Caco-2 (cell line): ENCODE measurements at regions of chr10 and their contacts with region 1.

Region 1: DNA sequence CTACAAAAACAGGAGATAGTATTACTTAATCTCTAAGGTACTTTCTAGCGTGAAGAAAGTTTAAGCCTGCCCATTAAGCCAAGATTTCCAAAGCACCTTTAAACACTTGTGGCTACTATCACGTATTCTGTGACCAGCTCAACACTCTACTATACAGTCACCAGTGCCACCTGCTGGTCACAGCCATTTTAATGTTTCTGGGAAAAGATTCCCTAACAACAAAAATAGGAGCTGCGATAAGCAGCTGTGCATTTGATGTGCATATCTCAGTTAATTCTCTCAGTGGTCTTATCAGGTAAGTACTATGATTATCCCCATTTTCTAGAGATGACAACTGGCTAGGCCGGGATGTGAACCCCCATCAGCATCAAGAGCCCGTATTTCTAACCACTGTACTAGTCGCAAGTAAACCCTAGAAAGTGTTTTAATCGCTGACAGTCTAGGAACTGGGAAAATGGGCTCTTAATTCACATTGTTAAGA is 860 bp downstream of the SEC31B start:
- DNase-seq: peak; percentile 52 to 66
- H3K4me3 ChIP-seq: no peak overlapping the region
- H3K4me3 Mint-ChIP-seq: no peak overlapping the region
- H3K27ac Mint-ChIP-seq: no peak overlapping the region
- H3K4me1 ChIP-seq: no peaks in the 10 kb centered on the region
- H3K4me1 Mint-ChIP-seq: no peaks in the 10 kb centered on the region
- H3K27me3 ChIP-seq: no peaks in the 10 kb centered on the region
- H3K27me3 Mint-ChIP-seq: no peaks in the 10 kb centered on the region
- CTCF ChIP-seq: peak; percentile 58 to 70

Region 2: DNA sequence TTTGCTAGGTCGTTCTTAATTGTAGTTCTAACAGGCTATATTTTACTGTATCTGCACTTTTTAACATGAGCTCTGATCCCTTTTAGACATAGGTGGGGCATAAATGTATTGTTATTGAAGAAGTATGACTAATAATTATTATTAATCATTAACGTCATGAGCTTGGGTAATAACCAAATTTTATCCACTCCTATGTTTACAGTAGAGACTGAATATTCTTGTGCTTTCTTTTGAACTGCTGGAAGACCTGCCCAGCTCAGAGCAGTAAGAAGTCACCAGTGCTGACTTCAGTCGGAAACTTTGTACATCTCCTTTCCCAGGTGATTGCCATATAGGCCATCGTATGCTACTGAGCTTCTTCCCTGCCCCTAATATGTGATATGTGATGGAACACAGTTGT is 207.5 kb before region 1 on chr10:
- CTCF ChIA-PET with region 1: no interaction called
- POLR2A ChIA-PET with region 1: no interaction called
- intact Hi-C with region 1: no loop called
- DNase-seq: no peak
- H3K4me3 ChIP-seq: no peak overlapping the region
- H3K4me3 Mint-ChIP-seq: no peak overlapping the region
- H3K27ac Mint-ChIP-seq: no peak overlapping the region
- H3K4me1 ChIP-seq: 0 out of 2 replicates have a peak, but pooled peaks cover 10% of the 10 kb centered on the region
- H3K4me1 Mint-ChIP-seq: peaks cover 13% of the 10 kb centered on the region
- H3K27me3 ChIP-seq: no peaks in the 10 kb centered on the region
- H3K27me3 Mint-ChIP-seq: peaks cover 4% of the 10 kb centered on the region
- CTCF ChIP-seq: no peak

Region 3: GRCh38 chr10:100433253-100434240 is 85.3 kb before region 1 on chr10:
- CTCF ChIA-PET with region 1: interaction called, 13 read pairs
- POLR2A ChIA-PET with region 1: no interaction called
- intact Hi-C with region 1: loop called (anchors 1 kb)
- DNase-seq: peak; percentile 95
- H3K4me3 ChIP-seq: no peak overlapping the region
- H3K4me3 Mint-ChIP-seq: no peak overlapping the region
- H3K27ac Mint-ChIP-seq: no peak overlapping the region
- H3K4me1 ChIP-seq: no peaks in the 10 kb centered on the region
- H3K4me1 Mint-ChIP-seq: no peaks in the 10 kb centered on the region
- H3K27me3 ChIP-seq: no peaks in the 10 kb centered on the region
- H3K27me3 Mint-ChIP-seq: no peaks in the 10 kb centered on the region
- CTCF ChIP-seq: peak; percentile 96 to 97

Region 4: DNA sequence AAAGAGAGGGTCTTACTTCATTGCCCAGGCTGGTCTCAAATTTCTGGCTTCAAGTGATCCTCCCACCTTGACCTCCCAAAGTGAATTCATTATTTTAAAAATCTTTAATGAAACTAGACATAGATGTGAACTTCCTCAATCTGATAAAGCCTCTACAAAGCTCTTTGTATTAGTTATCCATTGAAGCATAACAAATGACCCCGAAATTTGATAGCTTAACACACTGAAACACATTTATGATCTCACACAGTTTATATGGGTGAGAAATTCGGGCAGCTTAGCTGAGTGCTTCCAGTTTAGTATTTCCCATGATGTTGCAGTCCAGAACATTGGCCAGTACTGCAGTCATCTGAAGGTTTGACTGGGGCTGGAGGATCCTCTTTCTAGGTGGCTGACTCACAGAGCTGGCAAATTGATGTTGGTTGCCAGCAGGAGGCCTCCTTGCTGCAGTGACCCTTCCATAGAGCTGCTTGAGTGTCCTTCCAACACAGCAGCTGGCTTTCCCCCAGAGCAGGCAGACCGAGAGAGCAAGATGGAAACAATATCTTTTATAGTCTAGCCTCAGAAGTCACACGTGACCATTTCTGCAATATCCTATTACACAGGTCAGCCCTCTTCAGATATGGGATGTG is 72.6 kb before region 1 on chr10:
- CTCF ChIA-PET with region 1: interaction called, 23 read pairs
- POLR2A ChIA-PET with region 1: no interaction called
- intact Hi-C with region 1: no loop called
- DNase-seq: peak; percentile 37 to 46
- H3K4me3 ChIP-seq: no peak overlapping the region
- H3K4me3 Mint-ChIP-seq: no peak overlapping the region
- H3K27ac Mint-ChIP-seq: no peak overlapping the region
- H3K4me1 ChIP-seq: no peaks in the 10 kb centered on the region
- H3K4me1 Mint-ChIP-seq: peaks cover 13% of the 10 kb centered on the region
- H3K27me3 ChIP-seq: no peaks in the 10 kb centered on the region; the same call in 1 of the 2 replicates
- H3K27me3 Mint-ChIP-seq: no peaks in the 10 kb centered on the region
- CTCF ChIP-seq: peak in 1 of 2 experiments; percentile 51

Region 5: DNA sequence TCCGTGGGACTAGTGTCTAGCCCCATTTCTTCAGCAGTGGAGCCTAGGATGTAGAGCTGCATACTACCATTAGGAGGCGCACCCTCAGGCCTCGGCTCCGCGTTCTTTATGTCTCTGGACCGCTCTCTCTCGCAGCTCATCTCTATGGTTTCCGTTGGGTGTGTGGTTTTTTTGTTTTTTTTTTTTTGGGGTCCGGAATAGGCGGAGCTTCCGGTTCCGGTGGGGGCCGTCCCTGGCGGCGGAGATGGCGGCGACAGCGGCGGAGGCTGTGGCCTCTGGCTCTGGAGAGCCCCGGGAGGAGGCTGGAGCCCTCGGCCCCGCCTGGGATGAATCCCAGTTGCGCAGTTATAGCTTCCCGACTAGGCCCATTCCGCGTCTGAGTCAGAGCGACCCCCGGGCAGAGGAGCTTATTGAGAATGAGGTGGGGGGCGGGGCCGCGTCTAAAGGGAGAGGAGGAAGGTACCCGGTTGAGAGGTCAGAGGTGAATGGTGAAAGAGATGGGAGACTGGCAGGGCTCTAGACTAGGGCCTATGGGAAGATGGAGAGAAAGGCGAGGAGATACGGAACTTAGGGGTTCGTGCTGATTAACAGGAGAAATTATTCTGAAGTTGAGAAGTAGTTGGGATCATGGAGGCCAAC is 17.0 kb after region 1 on chr10 and contains the start of gene HIF1AN:
- CTCF ChIA-PET with region 1: interaction called, 32 read pairs
- POLR2A ChIA-PET with region 1: interaction called, 11 read pairs
- intact Hi-C with region 1: no loop called
- DNase-seq: peak; percentile 93 to 94
- H3K4me3 ChIP-seq: peak within 1 kb of the TSS; percentile 62
- H3K4me3 Mint-ChIP-seq: peak within 1 kb of the TSS; percentile 29
- H3K27ac Mint-ChIP-seq: no peak within 1 kb of the TSS
- H3K4me1 ChIP-seq: no peaks in the 10 kb centered on the region; the same call in 1 of the 2 replicates
- H3K4me1 Mint-ChIP-seq: no peaks in the 10 kb centered on the region
- H3K27me3 ChIP-seq: no peaks in the 10 kb centered on the region
- H3K27me3 Mint-ChIP-seq: no peaks in the 10 kb centered on the region
- CTCF ChIP-seq: peak; percentile 85 to 97
- total RNA-seq, gene HIF1AN: 71.2 and 72.5 TPM in 2 replicates